ENCODE measurements at regions of chr5 and their contacts with region 1.

Region 1: GRCh38 chr5:55691265-55692105 is 20.6 kb downstream of the SLC38A9 start:
- DNase-seq: no peak
- H3K4me3 ChIP-seq: no peak overlapping the region
- CTCF ChIP-seq: peak in 1 of 3 donors; percentile 59
- POLR2A ChIP-seq: no peak

Region 2: GRCh38 chr5:55344392-55344992 is 347.0 kb before region 1 on chr5:
- intact Hi-C with region 1: loop called (anchors 10 kb)
- DNase-seq: peak in 1 of 2 donors; percentile 62
- H3K4me3 ChIP-seq: no peak overlapping the region
- CTCF ChIP-seq: peak in 1 of 3 donors; percentile 62
- POLR2A ChIP-seq: no peak

Region 3: DNA sequence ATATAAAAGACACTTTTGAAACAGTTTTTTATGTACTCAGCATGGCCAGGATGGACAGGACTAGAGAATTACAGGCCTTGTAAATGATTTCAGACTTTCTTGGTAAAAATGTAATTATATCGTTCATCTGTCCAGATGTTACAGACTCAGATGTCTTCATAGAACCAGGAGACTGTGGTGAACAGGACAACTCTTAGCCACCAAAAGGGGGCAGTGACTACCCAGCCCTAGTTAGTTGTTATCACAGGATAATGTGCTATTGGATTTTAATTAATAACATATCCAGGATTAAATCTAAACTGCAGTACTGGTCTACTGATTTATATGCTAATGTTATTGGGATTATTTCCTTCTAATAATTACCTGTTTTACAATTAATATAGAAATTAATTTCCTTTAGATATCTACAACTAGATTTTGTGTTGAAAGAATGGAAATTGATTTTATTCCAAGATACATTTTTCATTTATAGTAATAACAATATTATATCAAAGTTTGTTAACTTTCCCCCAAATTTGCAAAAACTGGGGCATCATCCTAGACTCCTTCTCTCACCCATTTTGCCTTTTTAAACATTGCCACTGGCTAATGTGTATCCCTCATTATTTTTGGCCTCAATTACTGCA is 284.3 kb before region 1 on chr5:
- intact Hi-C with region 1: loop called (anchors 5 kb)
- DNase-seq: no peak
- H3K4me3 ChIP-seq: no peak overlapping the region
- CTCF ChIP-seq: no peak
- POLR2A ChIP-seq: no peak